ENCODE measurements at regions of chr7 and their contacts with region 1.

Region 1: GRCh38 chr7:21706546-21706945 is 163.7 kb downstream of the DNAH11 start:
- DNase-seq: no peak
- H3K4me3 ChIP-seq: no peak overlapping the region
- CTCF ChIP-seq: no peak

Region 2: DNA sequence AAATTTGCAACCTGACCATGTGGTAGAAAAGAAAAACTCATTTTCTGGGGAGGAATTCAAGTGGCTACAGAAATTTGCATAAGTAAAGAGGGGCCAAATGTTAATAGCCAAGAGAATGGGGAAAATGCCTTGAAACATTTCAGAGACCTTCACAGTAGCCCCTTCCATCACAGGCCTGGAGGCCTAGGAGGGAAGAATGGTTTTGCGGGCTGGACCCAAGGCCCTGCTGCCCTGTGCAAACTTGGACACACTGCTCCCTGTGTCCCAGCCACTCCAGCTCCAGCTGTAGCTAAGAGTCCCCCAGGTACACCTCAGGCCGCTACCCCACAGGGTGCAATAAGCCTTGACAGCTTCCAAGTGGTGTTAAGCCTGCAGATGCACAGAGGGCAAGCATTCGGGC is 180.1 kb before region 1 on chr7:
- in situ Hi-C with region 1: no loop called
- DNase-seq: no peak
- H3K4me3 ChIP-seq: no peak overlapping the region
- CTCF ChIP-seq: no peak

Region 3: DNA sequence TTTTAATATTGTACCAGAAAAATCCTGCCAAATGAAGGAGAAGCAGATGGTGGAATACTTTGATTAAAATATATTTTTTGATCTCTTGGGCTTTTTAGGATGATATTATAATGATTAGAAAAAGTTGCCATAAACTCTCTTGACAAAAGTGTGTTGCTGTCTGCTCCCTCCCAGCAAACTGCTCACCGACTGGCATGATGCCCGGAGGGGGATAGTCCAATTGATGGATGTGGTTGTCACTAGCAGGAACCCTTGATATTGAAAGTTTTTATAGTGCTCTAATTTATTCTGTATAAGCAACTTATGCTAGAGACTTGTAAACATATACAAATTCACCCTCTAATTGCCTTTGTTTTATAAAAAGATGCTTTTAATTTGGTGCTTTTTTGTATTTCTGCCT is 49.8 kb before region 1 on chr7:
- in situ Hi-C with region 1: loop called (anchors 5 kb)
- DNase-seq: no peak
- H3K4me3 ChIP-seq: no peak overlapping the region
- CTCF ChIP-seq: no peak